OCI-LY7 (cell line): ENCODE measurements at regions of chr11 and their contacts with region 1.

Region 1: GRCh38 chr11:17207317-17208258 is at the start of gene PIK3C2A:
- DNase-seq: peak; percentile 96
- H3K4me3 ChIP-seq: peak within 1 kb of the TSS; percentile 93
- H3K27ac ChIP-seq: peak within 1 kb of the TSS; percentile 66
- H3K4me1 ChIP-seq: peaks cover 19% of the 10 kb centered on the region
- CTCF ChIP-seq: no peak
- total RNA-seq, gene PIK3C2A: 17.4 and 57.2 TPM in 2 replicates

Region 2: GRCh38 chr11:17077520-17078401 is 129.8 kb before region 1 on chr11 and contains the start of gene RPS13:
- CTCF ChIA-PET with region 1: no interaction called
- POLR2A ChIA-PET with region 1: interaction called, 9 read pairs
- intact Hi-C with region 1: loop called (anchors 2 kb)
- DNase-seq: peak; percentile 98
- H3K4me3 ChIP-seq: peak within 1 kb of the TSS; percentile 84
- H3K27ac ChIP-seq: peak within 1 kb of the TSS; percentile 69
- H3K4me1 ChIP-seq: peaks cover 24% of the 10 kb centered on the region
- CTCF ChIP-seq: no peak
- total RNA-seq, gene RPS13: 1,576 and 1,911 TPM in 2 replicates

Region 3: DNA sequence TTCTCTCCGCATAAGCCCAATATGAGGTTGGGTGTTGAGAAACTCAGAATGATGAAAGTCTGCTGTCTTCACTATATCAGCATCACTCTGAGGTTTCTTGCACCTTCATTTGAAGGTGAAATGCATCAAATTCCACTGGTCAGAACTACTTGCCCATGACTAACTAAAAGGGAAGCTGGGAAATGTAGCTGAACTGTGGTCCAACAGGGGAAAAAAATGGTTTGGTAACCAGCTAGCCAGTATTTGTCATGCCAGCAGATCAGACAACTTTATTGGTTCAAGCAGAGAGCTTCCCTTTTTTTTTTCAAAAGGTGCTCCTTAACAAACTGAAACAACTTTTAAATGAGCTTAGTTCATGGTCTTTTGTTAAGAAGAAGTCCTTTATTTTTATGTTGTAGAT is 14.4 kb after region 1 on chr11:
- CTCF ChIA-PET with region 1: interaction called, 3 read pairs
- POLR2A ChIA-PET with region 1: interaction called, 12 read pairs
- intact Hi-C with region 1: no loop called
- DNase-seq: no peak
- H3K4me3 ChIP-seq: no peak overlapping the region
- H3K27ac ChIP-seq: no peak overlapping the region
- H3K4me1 ChIP-seq: no peaks in the 10 kb centered on the region
- CTCF ChIP-seq: no peak

Region 4: GRCh38 chr11:17276236-17277023 is 68.8 kb after region 1 on chr11 and contains the start of gene NUCB2:
- CTCF ChIA-PET with region 1: no interaction called
- POLR2A ChIA-PET with region 1: interaction called, 18 read pairs
- intact Hi-C with region 1: loop called (anchors 1 kb)
- DNase-seq: peak; percentile 96
- H3K4me3 ChIP-seq: peak within 1 kb of the TSS; percentile 79
- H3K27ac ChIP-seq: peak within 1 kb of the TSS; percentile 58
- H3K4me1 ChIP-seq: peaks cover 17% of the 10 kb centered on the region
- CTCF ChIP-seq: no peak
- total RNA-seq, gene NUCB2: 42.4 and 64.3 TPM in 2 replicates